KBM-7 (cell line): ENCODE measurements at regions of chr9 and their contacts with region 1.

Region 1: GRCh38 chr9:121992571-121993212 is 100.4 kb downstream of the TTLL11 start:
- DNase-seq: peak; percentile 77

Region 2: DNA sequence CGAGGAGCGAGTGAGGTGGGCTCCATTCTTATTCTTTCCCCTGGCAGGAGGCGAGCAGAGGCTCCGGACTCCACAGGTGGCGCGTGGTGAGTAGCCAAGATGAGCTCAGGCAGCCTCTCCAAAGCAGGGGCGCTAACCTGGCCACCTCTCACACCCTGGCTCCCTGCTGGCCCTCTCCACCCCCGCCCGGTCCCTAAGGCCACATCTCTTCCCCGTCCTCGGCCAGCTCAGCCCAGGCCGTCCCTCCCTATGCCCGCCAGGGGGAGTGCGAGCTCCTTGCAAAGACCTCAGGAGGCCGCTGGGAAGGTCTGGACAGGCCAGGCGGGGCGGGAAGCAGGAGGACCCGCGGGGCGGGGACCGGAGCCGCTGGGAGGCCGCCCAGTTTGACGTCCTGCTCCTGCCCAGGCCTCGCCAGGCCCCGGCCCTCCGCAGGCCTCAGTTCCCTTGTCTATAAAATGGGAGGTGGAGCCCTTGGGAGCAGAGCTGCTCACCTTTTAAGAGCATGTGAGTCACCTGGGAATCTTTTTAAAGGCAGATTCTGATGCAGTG is 446.7 kb before region 1 on chr9:
- in situ Hi-C with region 1: loop called (anchors 10 kb)
- DNase-seq: peak; percentile 85

Region 3: GRCh38 chr9:121906074-121906870 is 86.4 kb before region 1 on chr9:
- in situ Hi-C with region 1: no loop called
- DNase-seq: no peak